ENCODE measurements at regions of chr14 and their contacts with region 1.

Region 1: DNA sequence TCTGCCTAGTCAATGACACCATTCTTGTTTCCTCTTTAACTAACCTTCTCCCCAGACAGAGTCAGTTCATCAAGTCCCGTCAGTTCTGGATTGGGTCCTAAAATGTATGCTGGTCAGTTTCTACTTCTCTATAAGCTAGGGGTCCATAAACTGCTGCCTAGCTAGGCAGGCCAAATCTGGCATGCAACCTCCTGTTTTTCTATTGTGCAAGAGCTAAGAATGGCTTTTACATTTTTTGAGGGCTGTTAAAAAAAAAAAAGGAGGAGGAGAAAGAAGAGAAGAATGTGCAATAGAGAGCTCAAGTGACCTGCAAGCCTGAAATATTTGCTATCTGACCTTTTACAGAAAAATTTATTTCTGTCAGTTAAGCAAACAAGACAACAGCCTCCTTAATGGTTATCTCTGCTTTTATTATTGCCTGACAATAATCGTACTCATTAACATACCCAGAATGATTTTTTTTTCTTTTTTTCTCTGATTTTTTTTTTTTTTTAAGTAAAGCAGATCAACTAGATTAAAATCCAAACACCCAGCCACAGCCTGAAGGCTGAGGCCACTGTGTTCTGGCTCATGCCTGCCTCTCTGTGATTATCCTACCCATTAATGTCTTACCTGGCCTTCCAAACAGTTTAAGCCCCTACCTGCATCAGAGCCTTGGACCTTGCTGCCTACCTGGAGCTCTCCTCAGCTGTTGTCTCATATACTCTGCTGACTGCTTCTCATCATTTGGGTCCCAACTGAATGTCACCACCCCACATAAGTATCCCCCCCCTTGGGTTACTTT is 6.6 kb upstream of the TMED10 start:
- H3K4me3 Mint-ChIP-seq: no peak overlapping the region
- H3K27ac Mint-ChIP-seq: peak overlapping the region; percentile 74
- H3K4me1 Mint-ChIP-seq: peaks cover 47% of the 10 kb centered on the region
- H3K27me3 Mint-ChIP-seq: peaks cover 4% of the 10 kb centered on the region

Region 2: DNA sequence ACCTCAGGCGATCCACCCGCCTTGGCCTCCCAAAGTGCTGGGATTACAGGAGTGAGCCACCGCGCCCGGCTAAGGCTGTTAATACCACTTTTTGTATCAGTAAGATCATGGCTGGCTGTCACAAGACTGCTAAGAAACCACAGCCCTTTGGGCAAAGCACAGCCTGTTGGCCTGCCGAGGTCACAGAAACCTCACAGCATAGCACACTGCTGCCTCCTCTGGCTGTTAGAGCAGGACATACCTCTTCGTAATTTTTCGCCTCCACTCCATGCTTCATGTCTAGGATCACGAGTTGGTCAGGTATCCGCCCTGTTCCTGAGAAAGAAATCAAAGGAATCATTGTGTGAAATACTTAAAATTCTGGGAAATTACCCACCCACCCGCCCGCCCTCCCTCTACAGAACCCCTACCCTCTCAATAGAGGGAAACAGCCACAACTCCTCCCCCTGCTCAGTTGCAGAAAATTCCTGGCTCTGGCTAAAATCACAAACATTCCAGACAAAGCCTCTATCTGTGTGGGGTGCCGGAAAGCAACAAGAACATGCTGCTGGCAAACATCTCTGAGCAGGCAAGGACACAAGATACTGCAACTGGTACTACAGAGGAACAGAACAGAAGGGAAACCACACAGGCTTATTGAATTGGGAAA is 35.5 kb before region 1 on chr14:
- intact Hi-C with region 1: loop called (anchors 5 kb)
- H3K4me3 Mint-ChIP-seq: no peak overlapping the region
- H3K27ac Mint-ChIP-seq: peak overlapping the region; percentile 63
- H3K4me1 Mint-ChIP-seq: peaks cover 87% of the 10 kb centered on the region
- H3K27me3 Mint-ChIP-seq: no peaks in the 10 kb centered on the region

Region 3: GRCh38 chr14:75566321-75566720 is 383.3 kb after region 1 on chr14:
- intact Hi-C with region 1: no loop called
- H3K4me3 Mint-ChIP-seq: no peak overlapping the region
- H3K27ac Mint-ChIP-seq: no peak overlapping the region
- H3K4me1 Mint-ChIP-seq: peaks cover 29% of the 10 kb centered on the region
- H3K27me3 Mint-ChIP-seq: no peaks in the 10 kb centered on the region

Measured in dendritic cell treated with granulocyte-macrophage colony-stimulating factor and Interleukin-4, amounts not matched to agents 40 ng/mL and 50 ng/mL, for 4 days (primary cell).